Activated T-helper 1 cell treated with anti-CD3 and anti-CD28 coated beads, Interleukin-12 subunit alpha, Interleukin-12 subunit beta, Interleukin-2, Interleukin-4 antibody, amounts not matched to agents 30 ng/mL and 10 ng/mL and 1 ng/mL, durations not matched to agents 14 hours and 24 hours and 36 hours (primary cell): ENCODE measurements at regions of chr9 and their contacts with region 1.

Region 1: DNA sequence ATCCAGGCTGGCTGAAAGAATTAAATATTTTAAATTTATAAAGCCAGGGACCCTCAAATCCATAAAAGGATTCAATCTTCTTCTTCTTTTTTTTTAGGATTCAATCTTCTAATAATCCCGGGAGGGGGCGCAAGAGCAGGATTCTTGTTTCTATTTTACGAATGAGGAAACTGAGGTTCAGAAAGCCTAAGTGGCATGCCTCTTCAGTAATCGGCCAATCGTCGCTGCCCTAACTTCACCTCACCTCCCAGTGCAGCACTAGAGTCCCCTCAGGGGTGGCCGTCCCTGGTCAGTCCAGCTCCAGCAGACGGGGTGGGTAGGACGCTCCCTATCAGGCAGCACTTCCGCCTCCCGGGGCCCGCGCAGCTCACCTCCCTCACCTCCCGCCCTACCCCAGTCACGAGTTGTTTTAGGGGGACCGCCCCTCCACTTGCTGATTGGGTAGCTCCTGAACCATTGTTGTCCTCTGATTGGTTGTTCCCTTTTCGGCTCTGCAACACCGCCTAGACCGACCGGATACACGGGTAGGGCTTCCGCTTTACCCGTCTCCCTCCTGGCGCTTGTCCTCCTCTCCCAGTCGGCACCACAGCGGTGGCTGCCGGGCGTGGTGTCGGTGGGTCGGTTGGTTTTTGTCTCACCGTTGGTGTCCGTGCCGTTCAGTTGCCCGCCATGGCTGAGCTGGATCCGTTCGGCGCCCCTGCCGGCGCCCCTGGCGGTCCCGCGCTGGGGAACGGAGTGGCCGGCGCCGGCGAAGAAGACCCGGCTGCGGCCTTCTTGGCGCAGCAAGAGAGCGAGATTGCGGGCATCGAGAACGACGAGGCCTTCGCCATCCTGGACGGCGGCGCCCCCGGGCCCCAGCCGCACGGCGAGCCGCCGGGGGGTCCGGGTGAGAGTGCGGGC is at the start of gene CLTA:
- DNase-seq: peak; percentile 94
- H3K4me3 Mint-ChIP-seq: peak within 1 kb of the TSS; percentile 96
- H3K27ac Mint-ChIP-seq: peak within 1 kb of the TSS; percentile 78
- H3K4me1 Mint-ChIP-seq: peaks cover 56% of the 10 kb centered on the region
- H3K27me3 Mint-ChIP-seq: peaks cover 4% of the 10 kb centered on the region
- total RNA-seq, gene CLTA: 175 and 182 TPM in 2 replicates

Region 2: DNA sequence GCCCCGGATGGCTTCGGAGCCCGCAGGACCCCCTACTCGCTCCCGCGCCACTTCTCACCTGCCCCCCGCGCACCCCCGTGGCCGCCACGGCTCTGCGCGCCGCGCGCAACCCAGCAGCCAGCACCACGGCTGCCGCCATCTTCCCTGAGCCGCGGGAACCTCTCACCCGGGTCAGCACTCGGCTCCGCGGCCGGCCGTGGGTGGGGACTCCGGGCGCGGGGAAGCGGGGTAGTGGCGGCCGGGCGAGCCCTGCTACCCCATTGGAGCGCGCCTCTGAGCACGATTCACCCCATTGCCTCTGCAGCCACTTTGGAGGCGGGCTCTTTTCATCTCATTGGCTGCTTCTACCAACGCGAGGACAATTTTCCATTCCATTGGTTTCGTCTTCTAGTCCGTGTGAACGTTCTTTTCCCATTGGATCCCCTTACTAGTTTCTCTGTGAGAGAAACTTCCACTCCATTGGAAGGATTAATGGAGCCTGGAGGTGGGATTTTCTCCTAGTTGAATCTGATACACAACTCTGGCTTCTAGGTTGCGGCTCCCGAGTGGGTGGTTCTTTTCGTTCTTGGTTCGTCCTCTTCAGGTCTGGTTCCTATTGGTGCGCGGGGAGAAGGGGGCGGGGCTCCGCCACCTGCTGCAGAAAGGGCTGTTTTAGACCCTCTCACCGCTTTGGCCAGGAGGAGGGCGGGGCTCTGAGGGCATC is 375.6 kb before region 1 on chr9 and contains the start of gene HINT2:
- intact Hi-C with region 1: loop called (anchors 1 kb)
- DNase-seq: peak; percentile 97
- H3K4me3 Mint-ChIP-seq: peak within 1 kb of the TSS; percentile 91
- H3K27ac Mint-ChIP-seq: peak within 1 kb of the TSS; percentile 96
- H3K4me1 Mint-ChIP-seq: peaks cover 31% of the 10 kb centered on the region
- H3K27me3 Mint-ChIP-seq: peaks cover 6% of the 10 kb centered on the region
- total RNA-seq, gene HINT2: 47.5 and 55.3 TPM in 2 replicates

Region 3: DNA sequence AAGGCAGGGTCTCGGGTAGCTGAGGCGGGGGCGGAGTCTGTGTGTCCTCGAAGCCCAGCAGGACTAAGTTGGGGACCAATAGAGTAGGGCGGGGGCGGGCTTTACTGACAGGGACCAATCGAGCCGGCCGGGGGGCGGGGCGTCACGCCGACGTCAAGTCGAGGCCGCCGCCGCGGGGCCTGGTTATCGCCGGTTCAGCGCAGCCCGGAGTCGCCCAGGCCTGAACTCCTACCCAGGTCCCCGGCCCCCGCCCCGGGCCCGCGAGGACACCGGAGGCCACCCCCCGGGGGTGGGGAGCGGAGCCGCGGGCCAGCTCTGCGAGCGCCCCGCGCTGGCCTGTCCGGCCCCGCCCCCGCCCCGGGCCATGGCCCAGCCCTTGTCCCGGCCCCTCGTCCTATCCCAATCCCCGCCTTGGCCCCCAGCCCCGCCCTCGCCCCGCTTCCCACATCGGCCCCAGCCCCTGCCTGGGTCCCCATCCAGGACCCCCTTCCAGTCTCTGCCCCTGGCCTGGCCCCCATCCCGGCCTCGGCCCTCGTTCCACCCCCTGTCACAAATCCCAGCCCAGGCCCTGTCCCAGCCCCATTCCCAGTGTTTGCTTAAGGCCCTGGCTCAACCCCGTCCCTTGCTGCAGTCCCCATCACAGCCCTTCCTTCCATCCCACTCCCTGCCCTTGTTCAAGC is 361.4 kb before region 1 on chr9 and contains the start of gene TMEM8B:
- intact Hi-C with region 1: no loop called
- DNase-seq: peak; percentile 86
- H3K4me3 Mint-ChIP-seq: peak within 1 kb of the TSS; percentile 91
- H3K27ac Mint-ChIP-seq: peak within 1 kb of the TSS; percentile 89
- H3K4me1 Mint-ChIP-seq: peaks cover 22% of the 10 kb centered on the region
- H3K27me3 Mint-ChIP-seq: peaks cover 3% of the 10 kb centered on the region
- total RNA-seq, gene TMEM8B: 1.7 and 1.9 TPM in 2 replicates

Region 4: DNA sequence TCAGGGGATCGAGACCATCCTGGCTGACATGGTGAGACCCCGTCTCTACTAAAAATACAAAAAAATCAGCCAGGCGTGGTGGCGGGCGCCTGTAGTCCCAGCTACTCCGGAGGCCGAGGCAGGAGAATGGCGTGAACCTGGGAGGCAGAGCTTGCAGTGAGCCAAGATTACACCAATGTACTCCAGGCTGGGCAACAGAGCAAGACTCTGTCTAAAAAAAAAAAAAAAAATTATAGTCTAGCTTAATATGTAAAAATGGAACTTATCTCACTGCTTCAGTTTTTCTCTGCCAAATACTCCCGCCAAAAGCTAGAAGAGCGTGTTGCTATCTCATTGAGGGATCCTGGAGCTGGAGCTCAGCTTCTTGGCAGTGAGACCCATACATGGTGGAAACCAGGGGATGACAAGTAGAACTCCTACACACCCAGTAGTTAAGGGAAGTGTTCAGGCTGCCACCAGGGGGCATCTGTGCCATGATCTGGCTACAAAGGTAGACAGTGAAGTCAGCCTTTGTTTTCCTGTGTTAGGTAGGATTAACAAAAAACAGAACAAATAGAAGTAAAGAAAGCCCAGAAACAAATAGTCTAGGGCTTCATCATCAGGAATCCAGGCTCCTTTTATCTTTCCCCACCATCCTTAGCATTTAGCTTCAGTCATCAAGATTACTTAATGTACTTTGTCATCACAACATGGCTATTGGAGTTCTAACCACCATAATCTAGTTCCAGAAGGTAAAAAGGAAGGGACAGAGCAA is 87.7 kb before region 1 on chr9:
- intact Hi-C with region 1: loop called (anchors 1 kb)
- DNase-seq: peak; percentile 75
- H3K4me3 Mint-ChIP-seq: no peak overlapping the region
- H3K27ac Mint-ChIP-seq: no peak overlapping the region
- H3K4me1 Mint-ChIP-seq: peaks cover 8% of the 10 kb centered on the region
- H3K27me3 Mint-ChIP-seq: peaks cover 2% of the 10 kb centered on the region

Region 5: GRCh38 chr9:36166101-36166927 is 24.3 kb before region 1 on chr9:
- intact Hi-C with region 1: loop called (anchors 1 kb)
- DNase-seq: peak; percentile 83
- H3K4me3 Mint-ChIP-seq: peak overlapping the region; percentile 72
- H3K27ac Mint-ChIP-seq: no peak overlapping the region
- H3K4me1 Mint-ChIP-seq: peaks cover 9% of the 10 kb centered on the region
- H3K27me3 Mint-ChIP-seq: peaks cover 21% of the 10 kb centered on the region

Region 6: GRCh38 chr9:36258208-36258988 is 67.8 kb after region 1 on chr9 and contains the start of gene GNE:
- intact Hi-C with region 1: loop called (anchors 1 kb)
- DNase-seq: peak; percentile 98
- H3K4me3 Mint-ChIP-seq: peak within 1 kb of the TSS; percentile 96
- H3K27ac Mint-ChIP-seq: peak within 1 kb of the TSS; percentile 96
- H3K4me1 Mint-ChIP-seq: peaks cover 15% of the 10 kb centered on the region
- H3K27me3 Mint-ChIP-seq: no peaks in the 10 kb centered on the region
- total RNA-seq, gene GNE: 21.7 and 22.7 TPM in 2 replicates

Region 7: DNA sequence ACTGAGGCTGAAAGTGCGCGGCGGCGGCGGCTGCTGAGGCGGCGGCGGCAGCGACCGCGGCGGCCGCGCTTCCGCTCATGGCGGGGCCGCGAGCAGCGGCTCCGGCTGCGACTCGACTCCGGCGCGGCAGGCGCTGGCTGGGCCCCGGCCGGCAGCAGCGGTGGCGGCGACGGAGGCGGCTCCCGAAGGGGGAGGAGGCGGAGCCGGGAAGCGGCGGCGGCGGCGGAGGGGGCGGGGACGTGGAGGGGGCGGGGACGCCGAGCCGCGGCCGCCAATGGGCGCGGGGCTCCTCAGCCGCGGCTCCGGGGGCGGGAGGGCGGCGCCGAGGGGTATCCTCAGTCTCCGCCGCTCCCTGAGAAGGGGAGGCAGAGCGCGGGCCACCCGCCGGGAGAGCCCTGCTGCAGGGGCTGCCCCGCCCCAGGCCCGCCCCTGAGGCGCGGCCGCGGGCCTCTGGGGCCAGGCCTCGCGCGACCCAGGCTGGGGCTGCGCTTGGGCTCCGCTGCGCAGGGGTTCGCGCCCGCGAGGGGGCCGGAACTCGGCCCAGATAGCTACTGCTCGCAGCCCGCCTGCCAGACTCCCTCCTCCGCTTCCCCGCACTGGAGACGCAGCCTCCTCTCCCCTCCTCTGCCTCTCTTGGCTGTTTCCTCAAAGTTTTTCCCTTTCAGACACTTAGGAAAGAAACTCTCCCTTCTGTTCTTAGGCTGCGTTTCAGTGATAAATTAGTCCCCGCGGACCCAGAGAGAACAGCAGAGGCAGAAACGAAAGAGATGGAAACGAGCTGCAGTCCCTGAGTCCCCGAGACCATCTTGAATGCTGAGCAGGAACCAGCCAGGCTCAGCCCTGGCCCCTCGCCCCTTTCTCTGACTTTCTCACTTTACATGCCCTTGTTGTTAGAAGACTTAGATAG is 297.1 kb after region 1 on chr9:
- intact Hi-C with region 1: loop called (anchors 5 kb)
- DNase-seq: peak; percentile 91
- H3K4me3 Mint-ChIP-seq: peak overlapping the region; percentile 87
- H3K27ac Mint-ChIP-seq: peak overlapping the region; percentile 87
- H3K4me1 Mint-ChIP-seq: peaks cover 53% of the 10 kb centered on the region
- H3K27me3 Mint-ChIP-seq: no peaks in the 10 kb centered on the region